CD4-positive, alpha-beta memory T cell (primary cell): ENCODE measurements at regions of chr19 and their contacts with region 1.

Region 1: GRCh38 chr19:49502866-49503581 is 6.8 kb downstream of the RPS11 start:
- DNase-seq: peak; percentile 65 to 79 (median 74)
- H3K4me3 ChIP-seq: no peak overlapping the region
- H3K4me3 Mint-ChIP-seq: peak overlapping the region; percentile 6 to 100 (median 36)
- H3K27ac ChIP-seq: peak overlapping the region; percentile 95
- H3K27ac Mint-ChIP-seq: peak overlapping the region; percentile 91 to 100 (median 99)
- H3K4me1 ChIP-seq: peaks cover 52% of the 10 kb centered on the region
- H3K4me1 Mint-ChIP-seq: peaks cover 16 to 61% (median 33%) of the 10 kb centered on the region in 4 donors
- H3K27me3 ChIP-seq: no peaks in the 10 kb centered on the region
- H3K27me3 Mint-ChIP-seq: no peaks in the 10 kb centered on the region

Region 2: DNA sequence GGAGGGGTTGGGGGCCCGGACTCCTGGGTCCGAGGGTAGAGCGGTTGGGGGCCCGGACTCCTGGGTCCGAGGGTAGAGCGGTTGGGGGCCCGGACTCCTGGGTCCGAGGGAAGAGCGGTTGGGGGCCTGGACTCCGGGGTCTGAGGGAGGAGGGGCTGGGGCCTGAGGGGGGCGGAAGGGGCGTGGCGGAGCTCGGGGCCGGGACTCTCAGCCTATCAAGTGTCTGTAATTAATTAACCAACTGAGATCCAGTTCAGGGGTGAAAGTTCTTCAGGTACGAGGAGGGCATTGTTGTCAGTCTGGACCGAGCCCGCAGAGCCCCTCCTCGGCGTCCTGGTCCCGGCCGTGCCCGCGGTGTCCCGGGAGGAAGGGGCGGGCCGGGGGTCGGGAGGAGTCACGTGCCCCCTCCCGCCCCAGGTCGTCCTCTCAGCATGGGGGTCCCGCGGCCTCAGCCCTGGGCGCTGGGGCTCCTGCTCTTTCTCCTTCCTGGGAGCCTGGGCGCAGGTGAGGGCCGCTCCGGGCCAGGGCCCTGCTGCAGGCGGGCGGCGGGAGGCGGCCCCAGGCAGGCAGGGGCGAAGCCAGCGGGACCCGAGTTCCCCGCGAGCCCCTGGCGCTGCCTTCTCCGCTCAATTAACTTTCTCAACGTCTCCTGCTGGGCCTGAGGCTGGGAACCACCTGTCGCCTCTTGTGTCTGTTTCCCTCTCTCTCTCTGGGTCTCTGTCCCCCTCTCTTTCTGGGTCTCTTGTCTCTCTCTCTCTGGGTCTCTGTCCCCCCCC is 10.1 kb after region 1 on chr19:
- CTCF ChIA-PET with region 1: interaction called, 12 read pairs
- POLR2A ChIA-PET with region 1: interaction called, 3 read pairs
- intact Hi-C with region 1: no loop called
- DNase-seq: no peak
- H3K4me3 ChIP-seq: peak overlapping the region; percentile 6 to 51
- H3K4me3 Mint-ChIP-seq: peak overlapping the region; percentile 82 to 94 (median 88)
- H3K27ac ChIP-seq: peak overlapping the region; percentile 55
- H3K27ac Mint-ChIP-seq: peak overlapping the region in 6 of 7 donors; percentile 21 to 97 (median 88)
- H3K4me1 ChIP-seq: peaks cover 32% of the 10 kb centered on the region
- H3K4me1 Mint-ChIP-seq: peaks cover 14 to 42% (median 25%) of the 10 kb centered on the region in 4 donors
- H3K27me3 ChIP-seq: no peaks in the 10 kb centered on the region
- H3K27me3 Mint-ChIP-seq: no peaks in the 10 kb centered on the region

Region 3: DNA sequence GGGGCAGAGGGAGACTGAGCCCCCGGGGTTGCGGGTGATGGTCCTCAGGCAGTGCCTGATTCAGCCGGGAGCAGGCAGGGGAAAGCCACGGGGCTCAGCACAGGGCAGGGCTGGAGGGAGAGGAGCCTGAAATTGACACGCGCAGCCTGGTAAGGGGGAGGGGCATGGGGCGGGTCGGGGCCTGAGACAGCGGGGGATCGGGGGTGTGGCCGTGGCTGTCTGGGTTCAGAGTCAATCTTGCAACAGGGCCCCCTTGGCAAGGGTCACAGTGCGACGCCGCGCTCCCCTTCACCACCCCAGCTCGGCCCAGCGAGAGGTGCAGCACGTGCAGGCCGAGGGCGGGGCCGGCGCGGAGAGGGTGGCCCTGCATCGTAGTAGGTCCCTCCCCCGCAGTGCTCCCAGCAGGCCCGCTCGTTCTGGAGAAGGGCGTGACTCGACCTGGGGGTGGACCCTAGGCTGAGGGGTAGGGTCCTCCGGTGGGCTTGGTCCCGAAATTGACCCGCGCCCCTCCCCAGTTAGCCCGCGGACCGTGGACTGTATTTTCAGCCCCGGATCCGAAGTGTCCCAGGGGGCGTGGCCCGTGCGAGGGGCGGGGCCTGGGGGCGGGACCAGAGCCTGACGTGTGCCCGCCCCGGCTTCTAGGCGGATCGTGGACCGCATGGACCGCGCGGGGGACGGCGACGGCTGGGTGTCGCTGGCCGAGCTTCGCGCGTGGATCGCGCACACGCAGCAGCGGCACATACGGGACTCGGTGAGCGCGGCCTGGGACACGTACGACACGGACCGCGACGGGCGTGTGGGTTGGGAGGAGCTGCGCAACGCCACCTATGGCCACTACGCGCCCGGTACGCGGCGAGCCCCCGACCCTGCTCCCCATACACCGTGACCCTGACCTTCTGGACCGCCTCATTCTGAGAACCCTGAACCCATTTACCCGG is 30.8 kb after region 1 on chr19:
- CTCF ChIA-PET with region 1: interaction called, 11 read pairs
- POLR2A ChIA-PET with region 1: interaction called, 10 read pairs
- intact Hi-C with region 1: no loop called
- DNase-seq: peak; percentile 84 to 91 (median 87)
- H3K4me3 ChIP-seq: peak overlapping the region; percentile 61 to 70
- H3K4me3 Mint-ChIP-seq: peak overlapping the region; percentile 78 to 90 (median 88)
- H3K27ac ChIP-seq: peak overlapping the region; percentile 50
- H3K27ac Mint-ChIP-seq: peak overlapping the region; percentile 17 to 92 (median 83)
- H3K4me1 ChIP-seq: peaks cover 23% of the 10 kb centered on the region
- H3K4me1 Mint-ChIP-seq: peaks cover 16 to 35% (median 22%) of the 10 kb centered on the region in 4 donors
- H3K27me3 ChIP-seq: no peaks in the 10 kb centered on the region
- H3K27me3 Mint-ChIP-seq: no peaks in the 10 kb centered on the region

Region 4: GRCh38 chr19:50061650-50062049 is 558.6 kb after region 1 on chr19:
- CTCF ChIA-PET with region 1: no interaction called
- POLR2A ChIA-PET with region 1: no interaction called
- intact Hi-C with region 1: no loop called
- DNase-seq: no peak
- H3K4me3 ChIP-seq: no peak overlapping the region
- H3K4me3 Mint-ChIP-seq: no peak overlapping the region
- H3K27ac ChIP-seq: no peak overlapping the region
- H3K27ac Mint-ChIP-seq: no peak overlapping the region
- H3K4me1 ChIP-seq: no peaks in the 10 kb centered on the region
- H3K4me1 Mint-ChIP-seq: no peaks in the 10 kb centered on the region
- H3K27me3 ChIP-seq: no peaks in the 10 kb centered on the region
- H3K27me3 Mint-ChIP-seq: peaks cover 7 to 8% of the 10 kb centered on the region in 2 donors